Sigmoid colon (tissue), 7 donors: ENCODE measurements at regions of chr2 and their contacts with region 1.

Region 1: GRCh38 chr2:47165001-47165555 is 10.0 kb upstream of the STPG4 start:
- DNase-seq: no peak
- H3K4me3 ChIP-seq: no peak overlapping the region
- H3K27ac ChIP-seq: peak overlapping the region in 2 of 4 donors; percentile 36 to 42
- H3K4me1 ChIP-seq: peaks cover 0 to 73% (median 52%) of the 10 kb centered on the region in 4 donors
- H3K27me3 ChIP-seq: no peaks in the 10 kb centered on the region
- CTCF ChIP-seq: no peak
- EP300 ChIP-seq: no peak
- POLR2A ChIP-seq: no peak

Region 2: GRCh38 chr2:47058003-47058931 is 106.8 kb before region 1 on chr2:
- intact Hi-C with region 1: loop called (anchors 5 kb)
- DNase-seq: peak; percentile 92
- H3K4me3 ChIP-seq: no peak overlapping the region
- H3K27ac ChIP-seq: peak overlapping the region; percentile 83 to 89 (median 84)
- H3K4me1 ChIP-seq: peaks cover 0 to 84% (median 70%) of the 10 kb centered on the region in 4 donors
- H3K27me3 ChIP-seq: no peaks in the 10 kb centered on the region
- CTCF ChIP-seq: no peak
- EP300 ChIP-seq: peak in 3 of 4 donors; percentile 27 to 79 (median 77)
- POLR2A ChIP-seq: no peak

Region 3: DNA sequence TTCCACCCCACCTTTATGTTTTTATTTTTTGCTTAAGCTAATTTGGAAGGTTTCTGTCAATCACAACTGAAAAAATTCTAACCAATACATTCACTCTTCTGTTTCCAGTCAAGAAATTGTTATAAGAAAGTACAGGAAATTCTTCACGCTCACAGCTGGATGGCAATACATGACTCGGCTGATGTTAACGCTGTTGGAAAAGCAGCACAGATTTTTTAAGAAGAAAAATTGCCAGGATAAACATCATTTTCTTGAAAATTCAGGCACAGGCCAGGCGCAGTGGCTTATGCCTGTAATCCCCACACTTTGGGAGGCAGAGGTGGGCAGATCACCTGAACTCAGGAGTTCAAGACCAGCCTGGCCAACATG is 56.1 kb before region 1 on chr2:
- intact Hi-C with region 1: no loop called
- DNase-seq: no peak
- H3K4me3 ChIP-seq: no peak overlapping the region
- H3K27ac ChIP-seq: peak overlapping the region in 1 of 4 donors; percentile 61
- H3K4me1 ChIP-seq: no peaks in the 10 kb centered on the region
- H3K27me3 ChIP-seq: no peaks in the 10 kb centered on the region
- CTCF ChIP-seq: no peak
- EP300 ChIP-seq: no peak
- POLR2A ChIP-seq: no peak

Region 4: DNA sequence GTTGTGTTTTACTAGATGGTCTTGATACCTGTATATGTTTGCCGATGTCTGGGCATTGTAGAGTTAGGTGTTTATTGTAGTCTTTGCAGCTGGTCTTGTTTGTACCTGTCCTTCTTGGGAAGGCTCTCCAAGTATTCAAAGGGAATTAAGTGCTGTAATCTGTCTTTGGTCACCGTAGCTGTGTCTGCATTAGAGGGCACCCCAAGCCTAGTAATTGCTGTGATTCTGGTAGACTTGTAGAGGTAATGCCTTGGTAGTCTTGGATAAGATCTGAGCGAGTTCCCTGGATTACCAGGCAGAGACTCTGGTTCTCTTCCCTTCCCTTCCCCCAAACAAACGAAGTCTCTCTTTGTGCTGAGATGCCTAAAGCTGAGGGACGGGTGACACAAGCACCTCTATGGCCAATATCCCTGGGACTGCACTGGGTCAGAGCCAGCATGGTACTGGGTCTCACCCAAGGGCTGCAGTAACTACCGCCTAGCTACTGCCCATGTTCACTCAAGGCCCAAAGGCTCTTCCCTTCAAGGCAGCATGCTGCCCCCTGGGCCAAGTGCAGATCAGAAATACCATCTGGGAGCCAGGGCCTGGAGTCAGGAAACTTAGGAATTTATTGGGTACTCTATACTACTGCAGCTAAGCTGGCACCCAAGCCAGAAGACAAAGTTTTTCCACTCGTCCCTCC is 37.1 kb before region 1 on chr2:
- intact Hi-C with region 1: no loop called
- DNase-seq: no peak
- H3K4me3 ChIP-seq: no peak overlapping the region
- H3K27ac ChIP-seq: peak overlapping the region in 3 of 4 donors; percentile 3 to 66 (median 60)
- H3K4me1 ChIP-seq: peaks cover 0 to 18% (median 15%) of the 10 kb centered on the region in 4 donors
- H3K27me3 ChIP-seq: no peaks in the 10 kb centered on the region
- CTCF ChIP-seq: no peak
- EP300 ChIP-seq: no peak
- POLR2A ChIP-seq: no peak

Region 5: DNA sequence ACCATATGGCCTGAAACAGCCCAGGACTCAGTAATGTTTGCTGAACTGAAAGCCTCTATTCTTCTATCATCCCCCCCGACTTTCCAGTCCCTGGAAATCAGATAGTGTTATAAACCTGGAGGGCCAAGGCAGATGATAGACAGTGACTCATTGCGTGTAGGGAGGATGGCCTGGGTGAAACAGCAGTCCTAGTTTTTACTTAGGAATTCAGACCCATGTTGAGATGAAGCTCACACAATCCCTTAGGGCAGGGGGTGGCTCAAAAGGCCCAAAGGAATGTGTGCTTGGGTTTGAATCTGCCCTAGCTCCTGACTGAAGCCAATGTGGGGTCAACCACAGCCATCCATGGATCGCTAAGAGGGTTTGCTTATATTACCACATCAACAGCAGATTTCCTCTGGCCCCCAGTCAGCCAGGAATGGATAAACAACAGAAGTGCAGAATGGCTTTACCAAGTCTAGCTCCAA is 33.9 kb after region 1 on chr2:
- intact Hi-C with region 1: no loop called
- DNase-seq: no peak
- H3K4me3 ChIP-seq: no peak overlapping the region
- H3K27ac ChIP-seq: no peak overlapping the region
- H3K4me1 ChIP-seq: peaks cover 0 to 5% (median under 1%) of the 10 kb centered on the region in 4 donors
- H3K27me3 ChIP-seq: no peaks in the 10 kb centered on the region
- CTCF ChIP-seq: no peak
- EP300 ChIP-seq: no peak
- POLR2A ChIP-seq: no peak